ENCODE measurements at regions of chr12 and their contacts with region 1.

Region 1: GRCh38 chr12:13534645-13535398 is 338.3 kb downstream of the EMP1 start:
- DNase-seq: peak; percentile 84

Region 2: DNA sequence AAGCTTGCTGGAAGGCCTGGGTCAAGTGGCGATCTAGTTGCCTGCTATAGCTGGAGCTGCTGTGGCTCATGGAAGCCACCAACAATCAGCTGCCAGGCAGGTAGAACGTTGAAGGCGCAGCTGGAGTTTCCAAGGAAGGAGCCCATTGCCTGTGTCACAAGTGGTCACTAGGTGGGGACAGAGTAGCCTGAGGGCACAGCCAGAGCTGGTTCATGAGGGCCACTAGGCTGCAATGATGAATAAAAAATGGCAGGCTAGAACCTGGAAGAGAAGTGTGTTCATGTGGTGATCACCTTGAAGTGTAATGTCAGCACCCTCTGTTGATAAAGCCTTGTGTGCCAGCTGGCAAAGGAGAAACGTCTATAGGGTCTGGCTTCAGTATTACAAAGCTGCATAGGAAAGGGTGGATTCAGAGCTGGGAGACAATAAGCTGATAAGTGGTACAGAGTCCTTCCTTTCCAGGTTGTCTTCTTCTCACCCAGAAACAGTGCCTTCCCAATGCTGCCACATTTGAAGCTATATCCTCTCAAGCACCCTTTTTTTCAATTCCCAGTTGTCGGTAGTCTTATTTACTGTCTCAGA is 172.5 kb before region 1 on chr12:
- in situ Hi-C with region 1: loop called (anchors 25 kb)
- DNase-seq: peak; percentile 86